Activated B cell treated with CpG ODN at 0.5 μM for 24 hours (primary cell): ENCODE measurements at regions of chr11 and their contacts with region 1.

Region 1: GRCh38 chr11:25981998-25982397 is 349.9 kb upstream of the ANO3 start:
- DNase-seq: no peak
- ATAC-seq: peak; percentile 71
- H3K4me3 Mint-ChIP-seq: peak overlapping the region; percentile 47
- H3K27ac Mint-ChIP-seq: peak overlapping the region; percentile 43
- H3K4me1 Mint-ChIP-seq: peaks cover 27% of the 10 kb centered on the region
- H3K27me3 Mint-ChIP-seq: no peaks in the 10 kb centered on the region
- CTCF ChIP-seq: no peak

Region 2: GRCh38 chr11:26087120-26087935 is 105.3 kb after region 1 on chr11:
- CTCF ChIA-PET with region 1: interaction called, 3 read pairs
- POLR2A ChIA-PET with region 1: interaction called, 6 read pairs
- intact Hi-C with region 1: loop called (anchors 2 kb)
- DNase-seq: no peak
- ATAC-seq: peak; percentile 95
- H3K4me3 Mint-ChIP-seq: peak overlapping the region; percentile 65
- H3K27ac Mint-ChIP-seq: peak overlapping the region; percentile 86
- H3K4me1 Mint-ChIP-seq: peaks cover 54% of the 10 kb centered on the region
- H3K27me3 Mint-ChIP-seq: no peaks in the 10 kb centered on the region
- CTCF ChIP-seq: no peak

Region 3: DNA sequence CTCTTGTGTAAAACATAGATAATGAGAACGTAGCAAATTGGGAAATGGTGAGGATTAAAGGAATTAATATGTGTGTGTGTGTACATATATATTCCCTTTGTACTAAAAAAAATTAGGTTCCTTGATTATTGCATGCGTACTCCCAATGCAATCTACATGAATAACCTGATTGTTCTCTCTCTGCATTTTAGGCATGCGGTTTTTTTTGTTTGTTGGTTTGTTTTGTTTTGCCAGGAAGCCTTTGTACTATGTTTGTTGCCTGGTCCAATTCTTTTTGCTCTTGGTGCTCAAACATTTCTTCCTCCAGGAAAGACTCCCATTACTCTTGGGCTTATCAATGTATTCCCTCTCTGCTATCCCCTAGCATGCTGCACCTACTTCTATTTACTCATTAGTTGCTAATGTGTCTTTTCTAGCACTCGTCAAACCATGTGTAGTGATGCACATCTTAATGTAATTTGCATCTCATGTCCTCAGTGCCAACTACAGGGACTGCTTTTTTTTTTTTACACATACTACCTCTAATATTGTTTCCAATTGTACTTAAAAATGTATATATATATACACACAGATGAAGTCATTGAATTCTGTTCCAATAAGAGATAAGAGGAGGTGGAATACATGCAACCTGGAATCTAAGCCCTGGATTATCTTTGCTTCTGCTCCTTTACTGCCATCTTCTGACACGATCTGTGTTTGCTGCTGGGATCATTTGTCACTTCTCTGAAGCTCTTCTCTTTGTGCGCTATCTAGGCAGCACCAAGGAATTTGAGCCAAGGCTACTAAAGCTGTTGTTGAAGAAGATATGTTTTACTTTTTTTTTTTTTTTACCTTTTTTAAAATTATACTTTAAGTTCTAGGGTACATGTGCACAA is 152.7 kb after region 1 on chr11:
- CTCF ChIA-PET with region 1: interaction called, 86 read pairs
- POLR2A ChIA-PET with region 1: no interaction called
- intact Hi-C with region 1: loop called (anchors 1 kb)
- DNase-seq: no peak
- ATAC-seq: peak; percentile 37
- H3K4me3 Mint-ChIP-seq: no peak overlapping the region
- H3K27ac Mint-ChIP-seq: no peak overlapping the region
- H3K4me1 Mint-ChIP-seq: peaks cover 20% of the 10 kb centered on the region
- H3K27me3 Mint-ChIP-seq: no peaks in the 10 kb centered on the region
- CTCF ChIP-seq: no peak

Region 4: DNA sequence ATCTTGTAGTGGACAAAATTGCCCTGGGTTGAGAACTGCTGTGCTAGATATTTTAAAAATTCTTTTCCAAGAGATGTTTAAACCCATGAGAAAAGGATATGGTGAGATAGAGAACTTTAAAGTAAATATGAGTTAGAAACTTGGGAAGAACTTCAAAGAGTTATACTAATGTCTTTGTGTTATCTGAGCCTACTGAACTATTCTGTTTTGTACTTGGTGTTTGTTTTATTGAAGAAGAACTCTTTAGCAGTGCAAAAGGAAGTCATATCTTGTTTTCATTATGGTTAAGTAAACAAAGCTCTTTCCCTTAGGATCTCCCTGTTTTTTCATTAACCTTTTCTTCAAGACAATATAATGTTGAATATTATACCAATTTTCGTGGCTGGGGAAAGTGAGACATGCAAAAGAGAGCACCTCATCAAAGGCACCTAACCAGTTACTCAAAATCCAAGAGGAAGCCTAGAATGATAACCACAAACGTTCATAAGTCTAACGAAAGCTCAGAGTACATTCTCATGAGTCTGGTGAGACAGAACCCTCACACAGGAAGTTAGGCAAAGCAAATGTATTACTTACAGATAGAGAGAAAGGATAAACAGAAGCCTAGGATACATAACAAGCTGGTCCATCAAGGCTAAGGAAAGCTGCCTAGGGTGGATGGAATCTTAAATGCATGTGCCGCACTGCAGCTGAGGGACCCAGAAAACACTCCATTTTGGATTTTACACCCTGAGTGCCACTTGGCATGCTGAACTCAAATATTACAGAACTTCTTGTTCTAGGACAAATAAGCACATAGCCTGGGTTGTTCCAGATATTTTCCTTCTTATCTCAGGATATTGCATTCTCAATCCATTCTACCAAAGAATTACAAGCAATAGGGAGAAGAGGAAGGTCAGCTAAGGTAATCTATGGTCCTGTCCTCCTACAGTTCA is 237.5 kb after region 1 on chr11:
- CTCF ChIA-PET with region 1: interaction called, 12 read pairs
- POLR2A ChIA-PET with region 1: no interaction called
- intact Hi-C with region 1: no loop called
- DNase-seq: no peak
- ATAC-seq: no peak
- H3K4me3 Mint-ChIP-seq: no peak overlapping the region
- H3K27ac Mint-ChIP-seq: no peak overlapping the region
- H3K4me1 Mint-ChIP-seq: peaks cover 2% of the 10 kb centered on the region
- H3K27me3 Mint-ChIP-seq: no peaks in the 10 kb centered on the region
- CTCF ChIP-seq: no peak

Region 5: GRCh38 chr11:26227296-26227695 is 245.3 kb after region 1 on chr11:
- CTCF ChIA-PET with region 1: interaction called, 32 read pairs
- POLR2A ChIA-PET with region 1: no interaction called
- intact Hi-C with region 1: loop called (anchors 1 kb)
- DNase-seq: no peak
- ATAC-seq: peak; percentile 62
- H3K4me3 Mint-ChIP-seq: no peak overlapping the region
- H3K27ac Mint-ChIP-seq: no peak overlapping the region
- H3K4me1 Mint-ChIP-seq: peaks cover 4% of the 10 kb centered on the region
- H3K27me3 Mint-ChIP-seq: no peaks in the 10 kb centered on the region
- CTCF ChIP-seq: no peak

Region 6: DNA sequence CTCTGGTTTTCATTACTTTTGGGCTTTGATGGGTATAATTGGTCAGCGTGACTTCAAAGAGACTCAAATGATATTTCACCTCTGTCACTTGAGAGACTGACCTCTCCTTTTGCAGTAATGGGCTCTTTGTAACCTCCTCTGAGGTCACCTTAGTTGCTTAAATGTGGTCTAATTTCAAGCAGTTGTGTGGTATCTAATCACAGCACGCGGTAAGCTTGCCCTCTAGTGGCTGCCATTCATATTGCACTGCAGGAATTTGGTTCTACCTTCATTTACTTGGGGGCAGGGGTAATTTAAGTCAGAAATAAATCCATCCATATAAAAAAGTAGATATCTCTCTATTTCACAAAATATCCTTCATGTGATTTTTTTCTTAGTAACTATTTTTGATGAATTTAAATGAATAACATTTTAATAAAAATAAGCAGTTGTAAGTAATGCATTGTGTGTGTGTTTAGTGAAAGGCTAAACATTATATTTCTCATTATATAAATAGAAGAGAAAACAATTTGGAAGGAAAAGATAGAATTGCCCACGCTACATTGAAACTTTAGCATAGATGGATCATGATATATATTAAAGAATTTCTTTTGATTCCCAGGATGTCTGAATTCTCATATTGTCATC is 294.9 kb after region 1 on chr11:
- CTCF ChIA-PET with region 1: interaction called, 14 read pairs
- POLR2A ChIA-PET with region 1: no interaction called
- intact Hi-C with region 1: loop called (anchors 1 kb)
- DNase-seq: no peak
- ATAC-seq: peak; percentile 79
- H3K4me3 Mint-ChIP-seq: no peak overlapping the region
- H3K27ac Mint-ChIP-seq: no peak overlapping the region
- H3K4me1 Mint-ChIP-seq: no peaks in the 10 kb centered on the region
- H3K27me3 Mint-ChIP-seq: peaks cover 2% of the 10 kb centered on the region
- CTCF ChIP-seq: peak; percentile 94